AG04450 (cell line): ENCODE measurements at regions of chr11 and their contacts with region 1.

Region 1: GRCh38 chr11:62427630-62428233 is 8.9 kb downstream of the SCGB1A1 start:
- DNase-seq: no peak
- H3K4me3 ChIP-seq: no peak overlapping the region
- H3K27ac ChIP-seq: peak overlapping the region; percentile 80
- H3K27me3 ChIP-seq: no peaks in the 10 kb centered on the region
- CTCF ChIP-seq: no peak

Region 2: GRCh38 chr11:62400760-62401159 is 27.0 kb before region 1 on chr11:
- CTCF ChIA-PET with region 1: interaction called, 39 read pairs
- POLR2A ChIA-PET with region 1: no interaction called
- DNase-seq: peak; percentile 46
- H3K4me3 ChIP-seq: no peak overlapping the region
- H3K27ac ChIP-seq: no peak overlapping the region
- H3K27me3 ChIP-seq: peaks cover 4% of the 10 kb centered on the region
- CTCF ChIP-seq: no peak

Region 3: GRCh38 chr11:62449451-62449851 is 21.7 kb after region 1 on chr11:
- CTCF ChIA-PET with region 1: interaction called, 24 read pairs
- POLR2A ChIA-PET with region 1: interaction called, 3 read pairs
- DNase-seq: no peak
- H3K4me3 ChIP-seq: no peak overlapping the region
- H3K27ac ChIP-seq: no peak overlapping the region
- H3K27me3 ChIP-seq: no peaks in the 10 kb centered on the region
- CTCF ChIP-seq: no peak

Region 4: DNA sequence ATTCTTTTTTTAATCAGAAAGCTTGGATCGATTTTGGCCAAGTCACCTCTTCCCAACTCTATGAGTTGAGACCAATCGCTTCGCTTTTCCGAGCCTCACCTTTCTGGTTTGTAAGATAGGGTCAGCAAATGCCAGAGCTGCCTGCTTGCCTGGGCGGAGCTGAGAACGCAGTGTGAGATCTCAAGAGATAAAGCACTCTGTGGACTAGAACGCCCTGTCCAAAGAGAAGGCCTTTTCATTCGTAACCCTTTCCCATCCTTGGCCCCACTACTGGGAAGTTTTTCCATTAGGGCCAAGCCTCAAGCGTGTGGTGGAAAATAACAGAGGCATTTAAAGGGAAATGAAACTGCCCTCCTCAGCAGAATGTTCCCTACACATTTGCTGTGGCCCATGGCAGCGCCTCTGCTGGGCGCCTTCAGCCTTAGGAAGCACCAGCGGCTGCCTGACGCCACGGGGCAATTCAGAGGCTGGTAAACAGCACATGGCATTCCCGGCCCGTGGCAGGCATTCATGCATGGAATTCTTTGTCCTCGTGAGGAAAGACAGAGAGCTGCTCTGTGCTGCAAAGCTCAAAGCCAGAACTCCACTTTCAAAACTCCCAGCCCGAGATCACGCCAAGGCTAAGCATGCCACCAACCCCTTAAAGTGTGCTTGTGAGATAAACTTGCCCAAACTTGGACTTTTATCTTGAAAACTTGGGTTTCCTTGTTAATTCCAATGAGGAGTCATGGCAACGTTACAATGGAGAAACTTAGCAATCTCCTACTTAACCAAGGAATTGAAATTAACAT is 80.7 kb after region 1 on chr11:
- CTCF ChIA-PET with region 1: interaction called, 14 read pairs
- POLR2A ChIA-PET with region 1: interaction called, 5 read pairs
- DNase-seq: no peak
- H3K4me3 ChIP-seq: no peak overlapping the region
- H3K27ac ChIP-seq: peak overlapping the region; percentile 21
- H3K27me3 ChIP-seq: no peaks in the 10 kb centered on the region
- CTCF ChIP-seq: peak; percentile 48

Region 5: DNA sequence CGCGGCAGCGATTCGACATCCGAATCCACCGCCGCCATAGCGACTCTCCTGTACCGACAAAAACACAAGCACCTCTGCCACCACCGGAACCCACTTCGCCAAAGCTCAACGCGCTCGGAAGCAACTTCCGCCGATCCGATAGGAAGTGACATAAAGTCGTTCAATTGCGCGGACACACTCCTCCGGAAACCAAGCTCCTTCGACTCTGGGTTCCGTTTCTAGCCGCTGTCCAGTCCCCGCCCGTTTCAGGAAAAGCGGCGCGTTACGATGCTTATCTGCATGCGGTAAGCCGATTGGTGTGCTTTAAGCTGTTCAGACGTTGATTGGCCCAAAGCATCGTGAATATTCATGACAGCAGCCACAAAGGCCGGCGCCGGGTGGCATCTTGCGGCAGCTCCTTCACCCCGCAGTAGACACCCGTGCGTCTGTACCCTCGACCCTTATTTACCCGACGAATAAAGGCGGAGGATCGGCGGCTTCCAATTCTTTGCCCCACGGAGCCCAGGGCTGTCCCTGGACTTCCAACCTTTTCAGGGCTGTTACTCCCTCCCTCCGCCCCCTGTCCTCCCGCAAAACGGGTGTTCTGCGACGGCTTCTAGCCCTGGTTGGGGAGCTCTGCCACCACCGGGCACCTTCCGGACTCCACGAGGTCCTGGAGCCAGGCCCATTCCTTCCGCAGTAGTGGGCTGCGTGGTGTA is 163.9 kb after region 1 on chr11 and contains the start of gene TUT1:
- CTCF ChIA-PET with region 1: interaction called, 11 read pairs
- POLR2A ChIA-PET with region 1: interaction called, 11 read pairs
- DNase-seq: peak; percentile 97
- H3K4me3 ChIP-seq: peak within 1 kb of the TSS; percentile 68
- H3K27ac ChIP-seq: peak within 1 kb of the TSS; percentile 87
- H3K27me3 ChIP-seq: no peaks in the 10 kb centered on the region
- CTCF ChIP-seq: no peak
- polyA plus RNA-seq, gene TUT1: 7.8 and 9.0 TPM in 2 replicates

Region 6: DNA sequence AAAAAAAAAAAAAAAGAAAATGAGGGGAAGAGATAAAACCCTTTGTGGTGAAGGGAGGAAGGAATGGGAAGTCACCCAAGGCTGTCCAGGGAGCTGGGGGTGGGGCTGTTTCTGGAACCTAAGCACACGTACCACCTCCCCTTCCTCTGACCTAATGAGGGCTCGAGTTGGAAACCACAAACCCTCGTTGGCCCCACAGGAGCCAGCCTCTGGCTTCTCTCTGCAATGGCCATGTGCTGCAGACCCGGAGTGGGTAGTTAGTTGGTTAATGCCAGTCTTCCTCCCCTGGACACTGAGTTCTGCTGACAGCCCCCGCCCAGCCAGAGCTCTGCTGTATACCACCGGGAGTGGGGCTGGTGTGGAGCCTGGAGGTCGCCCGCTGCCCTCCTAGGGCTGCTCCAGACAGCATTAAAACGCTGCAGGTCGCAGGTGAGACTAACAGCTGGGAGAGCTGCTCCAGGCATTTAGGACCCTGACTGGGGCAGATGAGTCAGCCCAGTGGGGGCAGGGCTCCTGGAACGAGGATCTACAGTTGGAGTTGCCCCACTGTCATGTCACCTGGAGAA is 1078.3 kb after region 1 on chr11 and contains the start of gene LGALS12:
- CTCF ChIA-PET with region 1: no interaction called
- POLR2A ChIA-PET with region 1: no interaction called
- DNase-seq: no peak
- H3K4me3 ChIP-seq: no peak within 1 kb of the TSS
- H3K27ac ChIP-seq: no peak within 1 kb of the TSS
- H3K27me3 ChIP-seq: peaks cover 7% of the 10 kb centered on the region
- CTCF ChIP-seq: no peak
- polyA plus RNA-seq, gene LGALS12: not detected in 2 replicates